Left ventricle myocardium superior (tissue), 1 donor: ENCODE measurements at regions of chr19 and their contacts with region 1.

Region 1: DNA sequence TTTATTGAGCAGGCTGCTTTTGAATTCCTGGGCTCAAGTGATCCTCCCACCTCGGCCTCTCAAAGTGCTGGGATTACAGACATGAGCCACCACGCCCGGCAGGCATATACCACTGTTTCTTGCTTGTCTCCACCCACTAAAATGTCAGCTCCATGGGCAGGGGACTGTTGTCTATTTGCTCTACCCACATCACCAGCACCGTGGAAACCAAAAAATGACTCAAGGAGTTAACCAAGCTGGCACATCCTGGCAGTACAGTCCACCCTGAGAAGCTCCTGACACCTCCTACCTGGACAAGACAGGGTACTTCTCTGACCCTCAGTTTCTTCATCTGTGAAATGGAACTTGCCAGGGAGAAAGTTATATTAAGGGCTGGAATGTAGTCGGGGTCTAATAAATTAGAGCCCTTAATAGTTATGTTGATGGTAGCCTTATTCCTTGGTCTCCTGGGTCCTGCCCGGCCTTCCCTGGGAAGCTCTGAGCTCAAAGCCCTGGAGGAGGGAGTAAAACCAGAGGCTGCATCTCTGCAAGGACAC is 13.9 kb downstream of the RDH8 start:
- DNase-seq: no peak
- ATAC-seq: no peak

Region 2: GRCh38 chr19:9885077-9885552 is 142.1 kb before region 1 on chr19:
- intact Hi-C with region 1: no loop called
- DNase-seq: peak; percentile 61
- ATAC-seq: peak; percentile 78

Region 3: GRCh38 chr19:9934132-9934950 is 92.9 kb before region 1 on chr19:
- intact Hi-C with region 1: loop called (anchors 5 kb)
- DNase-seq: peak; percentile 75
- ATAC-seq: peak; percentile 82